Activated T-helper 2 cell treated with anti-CD3 and anti-CD28 coated beads, Interferon-gamma antibody, Interleukin-2, Interleukin-4, amounts not matched to agents 10 μg/mL and 5 μg/mL and 100 μg/mL, durations not matched to agents 14 hours and 24 hours and 36 hours (primary cell): ENCODE measurements at regions of chr6 and their contacts with region 1.

Region 1: GRCh38 chr6:131451321-131452144 is 121.5 kb upstream of the ARG1 start:
- DNase-seq: no peak
- H3K4me3 Mint-ChIP-seq: no peak overlapping the region
- H3K27ac Mint-ChIP-seq: peak overlapping the region; percentile 74
- H3K4me1 Mint-ChIP-seq: peaks cover 26% of the 10 kb centered on the region
- H3K27me3 Mint-ChIP-seq: no peaks in the 10 kb centered on the region

Region 2: GRCh38 chr6:131419702-131420101 is 31.8 kb before region 1 on chr6:
- intact Hi-C with region 1: loop called (anchors 5 kb)
- DNase-seq: no peak
- H3K4me3 Mint-ChIP-seq: no peak overlapping the region
- H3K27ac Mint-ChIP-seq: peak overlapping the region; percentile 81
- H3K4me1 Mint-ChIP-seq: peaks cover 35% of the 10 kb centered on the region
- H3K27me3 Mint-ChIP-seq: no peaks in the 10 kb centered on the region